Posterior cingulate gyrus (tissue), 11 donors: ENCODE measurements at regions of chr1 and their contacts with region 1.

Region 1: GRCh38 chr1:44036409-44037139 is 5.3 kb upstream of the SLC6A9 start:
- DNase-seq: peak in 8 of 10 donors; percentile 72 to 95 (median 76)

Region 2: GRCh38 chr1:43763497-43763973 is 273.0 kb before region 1 on chr1:
- intact Hi-C with region 1: loop called (anchors 5 kb)
- DNase-seq: peak in 7 of 10 donors; percentile 22 to 92 (median 66)

Region 3: GRCh38 chr1:44002606-44003157 is 33.9 kb before region 1 on chr1:
- intact Hi-C with region 1: loop called (anchors 1 kb)
- DNase-seq: no peak

Region 4: GRCh38 chr1:44072204-44072603 is 35.6 kb after region 1 on chr1:
- intact Hi-C with region 1: no loop called
- DNase-seq: peak in 2 of 10 donors; percentile 27 to 71

Region 5: GRCh38 chr1:44089371-44090049 is 52.9 kb after region 1 on chr1:
- intact Hi-C with region 1: no loop called
- DNase-seq: no peak

Region 6: GRCh38 chr1:44103270-44104131 is 66.9 kb after region 1 on chr1:
- intact Hi-C with region 1: no loop called
- DNase-seq: peak in 2 of 10 donors; percentile 75 to 79